ENCODE measurements at regions of chr5 and their contacts with region 1.

Region 1: GRCh38 chr5:76601470-76601869 is 21.7 kb downstream of the F2RL2 start:
- DNase-seq: peak; percentile 52
- ATAC-seq: peak; percentile 71
- H3K4me3 ChIP-seq: no peak overlapping the region
- H3K27ac ChIP-seq: no peak overlapping the region
- H3K4me1 ChIP-seq: no peaks in the 10 kb centered on the region
- H3K27me3 ChIP-seq: no peaks in the 10 kb centered on the region
- CTCF ChIP-seq: peak; percentile 69
- EP300 ChIP-seq: no peak
- POLR2A ChIP-seq: no peak
- RAD21 ChIP-seq: peak; percentile 53

Region 2: DNA sequence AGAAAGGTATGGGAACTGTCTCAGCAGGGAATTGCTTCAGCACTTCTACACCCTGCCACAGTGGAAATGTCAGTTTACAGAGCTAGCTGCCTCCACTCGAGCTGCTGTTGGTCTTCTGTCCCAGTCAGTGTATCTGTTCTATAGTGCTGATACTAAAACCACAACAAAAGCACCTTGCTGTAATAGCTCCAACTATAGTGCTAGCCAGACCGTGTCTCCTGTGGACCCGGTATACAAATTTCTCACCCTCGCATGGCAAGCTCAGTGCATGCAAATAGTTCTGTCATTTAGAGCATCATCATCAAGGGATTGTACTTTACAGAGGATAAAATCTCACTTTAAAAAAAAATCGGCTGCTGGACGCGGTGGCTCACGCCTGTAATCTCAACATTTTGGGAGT is 249.9 kb before region 1 on chr5:
- CTCF ChIA-PET with region 1: no interaction called
- POLR2A ChIA-PET with region 1: no interaction called
- in situ Hi-C with region 1: no loop called
- intact Hi-C with region 1: no loop called
- DNase-seq: no peak
- ATAC-seq: no peak
- H3K4me3 ChIP-seq: no peak overlapping the region
- H3K27ac ChIP-seq: no peak overlapping the region
- H3K4me1 ChIP-seq: no peaks in the 10 kb centered on the region
- H3K27me3 ChIP-seq: no peaks in the 10 kb centered on the region
- CTCF ChIP-seq: no peak
- EP300 ChIP-seq: no peak
- POLR2A ChIP-seq: no peak
- RAD21 ChIP-seq: no peak

Region 3: DNA sequence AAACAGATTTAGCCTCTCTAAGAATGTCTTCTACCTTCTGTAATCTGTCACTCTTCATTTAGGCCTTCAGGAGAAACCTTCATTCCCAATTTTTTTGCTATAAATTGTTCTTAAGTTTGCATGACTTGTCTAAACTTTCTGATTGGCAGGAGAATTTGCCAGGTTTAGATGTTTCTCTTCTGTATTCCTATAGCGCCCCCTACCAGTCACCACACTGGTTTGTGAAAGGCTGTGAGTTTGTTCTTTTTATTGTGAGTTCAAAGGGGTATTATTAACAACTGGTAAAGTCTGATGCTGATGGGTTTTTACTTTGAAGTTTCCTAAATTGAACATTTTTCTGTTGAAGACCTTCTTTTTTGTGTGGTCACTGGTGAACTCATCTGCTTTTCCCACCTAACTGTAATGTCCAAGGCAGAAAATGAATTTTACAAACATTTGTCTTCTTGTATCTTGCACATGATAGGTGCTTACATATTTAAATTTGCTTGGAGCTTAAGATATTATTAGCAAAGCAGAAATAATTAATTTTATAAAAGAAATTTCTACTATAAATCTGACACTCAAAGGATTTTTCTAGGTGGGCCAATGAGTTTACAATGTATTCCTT is 40.1 kb after region 1 on chr5:
- CTCF ChIA-PET with region 1: interaction called, 12 read pairs
- POLR2A ChIA-PET with region 1: no interaction called
- in situ Hi-C with region 1: no loop called
- intact Hi-C with region 1: loop called (anchors 1 kb)
- DNase-seq: peak; percentile 60
- ATAC-seq: peak; percentile 73
- H3K4me3 ChIP-seq: no peak overlapping the region
- H3K27ac ChIP-seq: no peak overlapping the region
- H3K4me1 ChIP-seq: peaks cover 10% of the 10 kb centered on the region
- H3K27me3 ChIP-seq: no peaks in the 10 kb centered on the region
- CTCF ChIP-seq: peak; percentile 69
- EP300 ChIP-seq: no peak
- POLR2A ChIP-seq: no peak
- RAD21 ChIP-seq: 0 out of 2 replicates have a peak, but pooled peaks have one; percentile 21

Region 4: GRCh38 chr5:76660360-76660759 is 58.9 kb after region 1 on chr5:
- CTCF ChIA-PET with region 1: no interaction called
- POLR2A ChIA-PET with region 1: no interaction called
- in situ Hi-C with region 1: no loop called
- intact Hi-C with region 1: no loop called
- DNase-seq: no peak
- ATAC-seq: no peak
- H3K4me3 ChIP-seq: no peak overlapping the region
- H3K27ac ChIP-seq: no peak overlapping the region
- H3K4me1 ChIP-seq: no peaks in the 10 kb centered on the region
- H3K27me3 ChIP-seq: no peaks in the 10 kb centered on the region; a peak in 1 of 5 replicates
- CTCF ChIP-seq: no peak
- EP300 ChIP-seq: no peak
- POLR2A ChIP-seq: no peak
- RAD21 ChIP-seq: no peak

Region 5: DNA sequence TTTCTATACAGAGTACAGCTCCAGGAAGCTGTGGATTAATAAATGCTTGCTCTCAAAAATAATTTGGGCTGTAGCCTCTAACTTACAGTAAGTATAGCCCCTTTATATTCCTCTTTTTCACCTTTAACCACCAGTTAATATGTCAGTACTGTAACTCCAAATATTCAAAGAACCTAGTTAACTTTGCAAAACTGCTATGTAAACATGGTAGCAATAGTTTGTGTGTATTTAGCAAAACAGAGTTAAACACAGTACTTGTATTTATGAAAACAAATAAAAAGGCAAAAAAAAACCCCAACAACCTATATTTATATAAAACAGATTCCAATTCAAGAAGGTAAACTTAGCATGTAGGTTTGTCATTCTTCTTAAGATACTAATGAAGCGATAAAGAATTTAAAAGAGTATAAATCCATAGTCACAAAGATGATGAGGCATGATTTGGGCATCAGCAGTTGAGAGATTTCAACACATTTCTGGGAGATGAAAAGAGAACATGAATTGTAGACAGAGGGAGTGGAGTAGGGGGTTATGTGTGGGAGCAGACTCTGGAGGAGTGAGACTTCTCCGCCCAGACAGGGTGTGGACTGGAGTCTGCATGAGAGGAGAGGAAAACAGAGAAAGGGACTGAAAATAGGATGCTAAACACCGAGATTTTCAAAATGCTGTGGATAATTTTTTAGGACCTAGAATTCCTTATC is 170.4 kb after region 1 on chr5:
- CTCF ChIA-PET with region 1: interaction called, 15 read pairs
- POLR2A ChIA-PET with region 1: interaction called, 5 read pairs
- in situ Hi-C with region 1: loop called (anchors 5 kb)
- intact Hi-C with region 1: no loop called
- DNase-seq: no peak
- ATAC-seq: peak; percentile 42; the same call in 1 of the 3 replicates
- H3K4me3 ChIP-seq: no peak overlapping the region
- H3K27ac ChIP-seq: no peak overlapping the region
- H3K4me1 ChIP-seq: peaks cover 15% of the 10 kb centered on the region; the same call in 1 of the 2 replicates
- H3K27me3 ChIP-seq: no peaks in the 10 kb centered on the region
- CTCF ChIP-seq: no peak
- EP300 ChIP-seq: no peak
- POLR2A ChIP-seq: no peak
- RAD21 ChIP-seq: no peak

Measured in HepG2 (cell line).